ENCODE measurements at regions of chr15 and their contacts with region 1.

Region 1: GRCh38 chr15:63939531-63940130 is 105.9 kb upstream of the HERC1 start:
- DNase-seq: peak; percentile 35
- H3K4me3 Mint-ChIP-seq: peak overlapping the region; percentile 40
- H3K27ac Mint-ChIP-seq: peak overlapping the region; percentile 91
- H3K4me1 Mint-ChIP-seq: peaks cover 56% of the 10 kb centered on the region
- H3K27me3 Mint-ChIP-seq: no peaks in the 10 kb centered on the region

Region 2: GRCh38 chr15:63805993-63806980 is 133.3 kb before region 1 on chr15:
- intact Hi-C with region 1: loop called (anchors 5 kb)
- DNase-seq: no peak
- H3K4me3 Mint-ChIP-seq: no peak overlapping the region
- H3K27ac Mint-ChIP-seq: peak overlapping the region; percentile 19
- H3K4me1 Mint-ChIP-seq: peaks cover 52% of the 10 kb centered on the region
- H3K27me3 Mint-ChIP-seq: no peaks in the 10 kb centered on the region

Region 3: GRCh38 chr15:63896336-63897115 is 43.1 kb before region 1 on chr15:
- intact Hi-C with region 1: loop called (anchors 2 kb)
- DNase-seq: peak; percentile 67
- H3K4me3 Mint-ChIP-seq: peak overlapping the region; percentile 17
- H3K27ac Mint-ChIP-seq: peak overlapping the region; percentile 61
- H3K4me1 Mint-ChIP-seq: peaks cover 83% of the 10 kb centered on the region
- H3K27me3 Mint-ChIP-seq: peaks cover 4% of the 10 kb centered on the region

Region 4: DNA sequence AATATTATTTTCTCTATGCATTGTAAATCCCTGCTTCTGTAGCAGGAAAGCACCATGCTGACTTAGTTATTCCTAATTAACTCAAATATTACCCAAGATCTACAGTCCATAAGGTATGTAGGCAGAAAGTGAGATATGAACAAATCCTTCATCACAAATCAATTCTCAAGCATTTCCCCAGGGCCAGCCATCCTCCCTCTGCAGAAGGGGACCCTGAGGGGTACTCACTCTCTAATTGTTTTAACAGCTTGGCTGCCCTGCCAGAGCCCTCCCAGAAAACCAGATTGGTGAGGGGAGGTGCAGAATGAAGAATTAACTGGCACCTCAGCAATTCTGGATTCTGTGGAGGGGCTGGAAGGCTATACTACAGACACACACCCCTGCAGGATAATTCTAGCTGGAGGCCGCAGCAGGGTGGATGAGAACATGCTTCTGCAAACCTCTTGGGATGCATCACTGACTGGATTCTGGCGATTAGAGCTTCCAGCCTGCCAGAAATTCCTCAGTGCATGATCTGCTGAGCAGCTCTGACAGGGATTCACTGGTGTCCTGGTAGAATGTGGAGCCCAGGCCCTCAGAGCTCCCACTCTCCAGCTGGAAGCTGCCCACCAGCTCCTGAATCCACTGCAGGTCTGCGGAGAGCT is 17.2 kb before region 1 on chr15:
- intact Hi-C with region 1: loop called (anchors 1 kb)
- DNase-seq: no peak
- H3K4me3 Mint-ChIP-seq: no peak overlapping the region
- H3K27ac Mint-ChIP-seq: no peak overlapping the region
- H3K4me1 Mint-ChIP-seq: peaks cover 28% of the 10 kb centered on the region
- H3K27me3 Mint-ChIP-seq: peaks cover 2% of the 10 kb centered on the region

Measured in activated T-helper 1 cell treated with anti-CD3 and anti-CD28 coated beads, Interleukin-12 subunit alpha, Interleukin-12 subunit beta, Interleukin-2, Interleukin-4 antibody, amounts not matched to agents 30 ng/mL and 10 ng/mL and 1 ng/mL, durations not matched to agents 14 hours and 24 hours and 36 hours (primary cell).